Ascending aorta (tissue), 2 donors: ENCODE measurements at regions of chr11 and their contacts with region 1.

Region 1: DNA sequence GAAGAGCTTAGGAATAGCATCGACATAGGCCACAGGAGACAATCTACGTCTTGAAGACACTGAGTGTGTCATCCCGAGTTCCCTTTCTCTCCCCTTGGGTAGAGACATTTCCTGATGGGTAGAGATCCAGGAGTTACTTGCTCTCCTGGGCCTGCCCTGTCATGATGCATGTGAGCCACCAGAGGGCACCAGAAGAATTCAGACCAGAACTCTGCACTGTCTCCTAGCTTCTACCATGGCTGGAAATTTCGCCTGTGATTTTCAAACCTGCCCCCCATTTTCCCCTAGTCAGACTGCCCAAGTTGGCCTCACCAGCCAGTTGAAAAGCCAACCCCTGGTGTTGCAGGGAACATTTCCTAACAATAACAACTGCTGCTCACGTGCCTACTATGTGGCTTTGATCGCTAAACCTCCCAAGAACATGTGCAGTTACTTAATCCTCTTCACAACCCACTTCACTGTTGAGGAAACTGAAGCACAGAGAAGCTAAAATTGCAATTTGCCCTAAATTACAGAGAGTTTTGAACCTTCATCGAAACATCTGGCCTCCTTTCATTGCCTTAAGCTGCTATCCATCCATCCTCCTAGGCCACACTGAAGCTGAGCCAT is 47.2 kb downstream of the C11orf58 start:
- DNase-seq: peak in 1 of 2 donors; percentile 85
- H3K4me3 ChIP-seq: no peak overlapping the region
- H3K27ac ChIP-seq: no peak overlapping the region
- H3K4me1 ChIP-seq: peaks cover 5 to 10% of the 10 kb centered on the region in 2 donors
- H3K27me3 ChIP-seq: no peaks in the 10 kb centered on the region
- CTCF ChIP-seq: peak; percentile 77 to 86 (median 81)

Region 2: DNA sequence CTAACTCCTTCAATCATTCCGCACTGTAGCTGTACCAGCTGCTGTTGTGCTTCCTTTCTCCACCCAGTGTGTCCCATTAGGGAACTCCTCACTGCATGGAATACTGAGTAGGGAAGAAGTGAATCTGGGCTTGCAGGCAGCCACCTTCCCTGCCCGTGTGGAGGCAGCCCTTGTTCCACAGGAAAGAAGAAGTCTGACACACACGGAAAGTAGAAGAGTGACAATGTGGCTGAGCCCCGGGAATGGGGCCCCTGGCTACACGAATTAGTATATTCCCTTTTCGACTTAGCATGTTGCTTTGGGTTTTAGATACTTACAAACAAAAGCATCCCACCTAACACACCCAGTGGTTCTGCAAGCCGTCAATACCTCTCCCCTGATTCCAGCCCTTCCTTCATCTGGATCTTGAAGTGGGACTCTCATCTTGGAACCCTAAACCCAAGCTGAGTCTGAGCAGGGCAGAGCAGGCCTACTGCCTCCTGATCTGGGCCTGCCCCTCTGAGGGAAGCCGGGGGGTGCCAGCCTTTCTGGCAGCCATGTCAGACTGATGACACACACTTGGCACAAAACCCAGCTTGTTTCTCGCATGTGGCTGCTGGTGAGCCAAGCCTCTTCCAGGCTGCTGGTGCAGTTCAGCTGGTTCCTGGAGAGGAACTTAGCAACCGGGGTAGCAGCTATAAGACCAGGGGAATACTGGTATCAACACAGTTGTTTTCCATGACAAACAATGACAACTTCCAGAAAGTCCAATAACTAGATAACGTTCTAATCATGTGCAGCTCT is 24.5 kb after region 1 on chr11:
- intact Hi-C with region 1: loop called (anchors 2 kb)
- DNase-seq: peak; percentile 47 to 84
- H3K4me3 ChIP-seq: no peak overlapping the region
- H3K27ac ChIP-seq: peak overlapping the region in 1 of 2 donors; percentile 42
- H3K4me1 ChIP-seq: peaks cover 0 to 13% of the 10 kb centered on the region in 2 donors
- H3K27me3 ChIP-seq: no peaks in the 10 kb centered on the region
- CTCF ChIP-seq: no peak

Region 3: DNA sequence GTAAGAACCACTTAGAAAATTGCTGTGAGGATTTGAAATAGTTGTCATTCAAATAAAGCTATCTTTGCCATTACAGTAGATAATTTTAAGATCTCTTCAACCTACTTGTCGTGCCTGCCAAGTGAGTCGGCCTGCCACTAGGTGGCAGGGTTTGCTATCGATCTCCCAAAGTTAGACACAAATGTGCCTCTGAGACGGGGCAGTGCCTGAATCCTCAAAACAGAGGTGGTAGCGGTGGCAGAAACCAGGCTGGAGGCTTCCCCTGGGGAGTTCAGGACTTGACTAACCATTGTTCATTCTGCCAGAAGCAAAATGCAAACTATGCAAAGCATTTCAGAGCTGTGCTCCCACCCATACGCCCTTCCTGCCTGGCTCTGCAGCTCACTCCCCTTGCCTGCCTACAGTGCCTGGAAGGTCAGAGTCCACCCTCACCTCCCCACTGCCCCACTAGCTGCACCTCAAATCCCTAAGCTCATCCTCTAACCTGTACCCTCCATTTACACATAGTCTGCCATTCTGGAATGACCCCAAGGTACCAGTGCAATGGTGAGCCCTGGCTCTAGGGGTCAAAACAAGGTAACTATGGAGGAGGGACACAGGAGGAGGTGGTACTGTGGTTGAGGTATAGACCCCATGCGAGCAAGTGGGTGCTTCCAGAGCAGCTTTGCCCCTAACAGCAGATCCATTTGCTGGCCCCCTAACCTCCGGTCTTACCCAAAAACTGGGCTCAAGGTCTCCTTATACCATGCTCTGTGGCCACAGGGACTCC is 34.9 kb after region 1 on chr11:
- intact Hi-C with region 1: loop called (anchors 1 kb)
- DNase-seq: peak in 1 of 2 donors; percentile 91
- H3K4me3 ChIP-seq: no peak overlapping the region
- H3K27ac ChIP-seq: no peak overlapping the region
- H3K4me1 ChIP-seq: no peaks in the 10 kb centered on the region
- H3K27me3 ChIP-seq: no peaks in the 10 kb centered on the region
- CTCF ChIP-seq: peak; percentile 61 to 88 (median 80)

Region 4: DNA sequence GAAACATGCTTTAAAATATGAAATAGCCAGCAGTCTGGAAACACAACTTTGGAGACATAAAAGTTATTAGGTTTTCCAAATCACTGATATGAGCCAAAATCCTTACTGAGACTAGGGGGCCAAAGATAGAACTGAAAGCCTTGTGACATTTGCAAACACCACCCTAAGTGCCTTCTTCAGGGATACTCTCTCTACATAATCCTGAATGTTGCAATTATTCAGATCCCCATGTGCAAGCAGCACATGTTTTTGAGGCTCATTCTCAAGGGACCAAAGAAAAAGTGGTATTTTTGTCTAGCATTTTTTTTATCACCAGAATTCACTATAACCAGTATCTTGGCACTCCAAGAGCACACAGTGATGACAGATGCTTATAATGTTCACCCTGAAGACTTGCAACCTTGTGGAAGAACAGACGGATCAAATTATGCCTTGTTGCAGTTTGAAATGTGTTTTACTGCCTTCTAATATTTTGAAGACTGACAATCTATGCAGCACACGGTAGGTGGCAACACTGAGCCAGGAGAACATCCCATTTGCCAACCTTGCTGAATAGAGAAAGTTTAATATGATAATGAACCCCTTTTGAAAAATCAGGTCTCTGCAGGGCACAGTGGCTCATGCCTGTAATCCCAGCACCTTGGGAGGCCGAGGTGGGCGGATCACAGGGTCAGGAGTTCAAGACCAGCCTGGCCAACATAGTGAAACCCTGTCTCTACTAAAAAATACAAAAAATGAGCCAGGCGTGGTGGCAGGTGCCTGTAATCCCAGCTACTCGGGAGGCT is 150.1 kb after region 1 on chr11:
- intact Hi-C with region 1: loop called (anchors 10 kb)
- DNase-seq: no peak
- H3K4me3 ChIP-seq: no peak overlapping the region
- H3K27ac ChIP-seq: no peak overlapping the region
- H3K4me1 ChIP-seq: peaks cover 0 to 4% of the 10 kb centered on the region in 2 donors
- H3K27me3 ChIP-seq: no peaks in the 10 kb centered on the region
- CTCF ChIP-seq: peak in 2 of 3 experiments; percentile 46 to 72

Region 5: GRCh38 chr11:17063171-17064002 is 277.8 kb after region 1 on chr11:
- intact Hi-C with region 1: loop called (anchors 5 kb)
- DNase-seq: no peak
- H3K4me3 ChIP-seq: no peak overlapping the region
- H3K27ac ChIP-seq: no peak overlapping the region
- H3K4me1 ChIP-seq: no peaks in the 10 kb centered on the region
- H3K27me3 ChIP-seq: no peaks in the 10 kb centered on the region
- CTCF ChIP-seq: peak in 2 of 3 experiments; percentile 30 to 64